ENCODE measurements at regions of chr22 and their contacts with region 1.

Region 1: GRCh38 chr22:30386960-30387827 is at the start of gene RNF215:
- DNase-seq: peak; percentile 87 to 88 (median 88)
- ATAC-seq: peak; percentile 84 to 94 (median 89)
- H3K4me3 ChIP-seq: peak within 1 kb of the TSS; percentile 56 to 68 (median 57)
- H3K27ac ChIP-seq: peak within 1 kb of the TSS in 1 of 3 donors; percentile 40
- H3K4me1 ChIP-seq: peaks cover 0 to 13% (median 6%) of the 10 kb centered on the region in 4 donors
- H3K27me3 ChIP-seq: no peaks in the 10 kb centered on the region
- CTCF ChIP-seq: peak; percentile 92 to 98 (median 93)
- POLR2A ChIP-seq: no peak
- total RNA-seq, gene RNF215: 6.2 to 10.0 (median 7.4) TPM

Region 2: GRCh38 chr22:29394931-29395581 is 992.1 kb before region 1 on chr22:
- intact Hi-C with region 1: loop called in 1 of 2 experiments (anchors 5 kb)
- DNase-seq: peak; percentile 59 to 72 (median 64)
- ATAC-seq: peak; percentile 92 to 95 (median 94)
- H3K4me3 ChIP-seq: no peak overlapping the region
- H3K27ac ChIP-seq: no peak overlapping the region
- H3K4me1 ChIP-seq: no peaks in the 10 kb centered on the region
- H3K27me3 ChIP-seq: no peaks in the 10 kb centered on the region
- CTCF ChIP-seq: peak; percentile 78 to 83 (median 80)
- POLR2A ChIP-seq: no peak

Region 3: GRCh38 chr22:30104501-30105156 is 282.6 kb before region 1 on chr22:
- intact Hi-C with region 1: loop called in 1 of 2 experiments (anchors 10 kb)
- DNase-seq: no peak
- ATAC-seq: no peak
- H3K4me3 ChIP-seq: no peak overlapping the region
- H3K27ac ChIP-seq: no peak overlapping the region
- H3K4me1 ChIP-seq: no peaks in the 10 kb centered on the region
- H3K27me3 ChIP-seq: no peaks in the 10 kb centered on the region
- CTCF ChIP-seq: no peak
- POLR2A ChIP-seq: no peak

Region 4: DNA sequence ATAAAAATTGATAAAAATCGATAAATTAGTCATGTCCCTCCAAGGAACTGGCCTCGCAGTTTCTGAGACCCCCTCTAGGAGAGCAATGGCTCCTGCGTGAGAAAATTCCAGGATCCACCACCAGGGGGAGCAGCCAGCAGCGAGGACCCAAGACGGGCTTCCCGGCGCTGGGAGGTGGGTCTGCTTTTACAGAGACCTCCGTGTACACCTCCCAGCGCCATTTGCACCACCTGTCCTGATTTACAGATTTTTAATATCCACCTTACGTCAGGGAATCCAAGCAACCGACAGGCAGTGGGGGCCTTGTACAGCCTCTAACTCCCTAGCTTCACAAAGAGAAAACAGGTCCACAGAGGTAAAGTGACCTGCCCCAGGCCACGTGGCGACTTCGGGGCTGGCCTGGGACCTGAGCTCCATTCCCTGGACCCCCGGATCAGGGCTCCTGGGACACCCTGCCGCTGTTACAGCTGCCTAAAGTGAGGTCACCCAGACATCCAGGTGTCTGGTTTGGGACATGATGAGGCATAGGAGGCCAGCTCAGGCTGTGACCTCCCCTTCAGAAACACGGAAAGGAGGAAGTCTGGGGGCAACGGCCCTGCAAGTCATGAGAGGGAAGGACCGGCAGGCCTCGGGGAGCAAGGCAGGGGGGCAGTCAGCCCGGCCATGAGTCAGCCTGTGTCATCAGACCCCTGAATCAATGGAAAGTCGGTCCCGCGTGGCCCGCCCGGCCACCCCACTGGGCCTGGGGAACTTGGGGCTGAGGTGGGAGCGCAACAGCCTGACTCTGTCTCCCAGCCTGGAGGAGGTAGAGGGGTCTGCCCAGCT is 124.1 kb before region 1 on chr22:
- intact Hi-C with region 1: loop called (anchors 5 to 10 kb)
- DNase-seq: peak; percentile 71 to 78 (median 78)
- ATAC-seq: peak; percentile 47 to 71 (median 52)
- H3K4me3 ChIP-seq: peak overlapping the region in 2 of 3 donors; percentile 20 to 24
- H3K27ac ChIP-seq: no peak overlapping the region
- H3K4me1 ChIP-seq: no peaks in the 10 kb centered on the region
- H3K27me3 ChIP-seq: no peaks in the 10 kb centered on the region
- CTCF ChIP-seq: peak; percentile 93 to 99 (median 97)
- POLR2A ChIP-seq: no peak

Region 5: DNA sequence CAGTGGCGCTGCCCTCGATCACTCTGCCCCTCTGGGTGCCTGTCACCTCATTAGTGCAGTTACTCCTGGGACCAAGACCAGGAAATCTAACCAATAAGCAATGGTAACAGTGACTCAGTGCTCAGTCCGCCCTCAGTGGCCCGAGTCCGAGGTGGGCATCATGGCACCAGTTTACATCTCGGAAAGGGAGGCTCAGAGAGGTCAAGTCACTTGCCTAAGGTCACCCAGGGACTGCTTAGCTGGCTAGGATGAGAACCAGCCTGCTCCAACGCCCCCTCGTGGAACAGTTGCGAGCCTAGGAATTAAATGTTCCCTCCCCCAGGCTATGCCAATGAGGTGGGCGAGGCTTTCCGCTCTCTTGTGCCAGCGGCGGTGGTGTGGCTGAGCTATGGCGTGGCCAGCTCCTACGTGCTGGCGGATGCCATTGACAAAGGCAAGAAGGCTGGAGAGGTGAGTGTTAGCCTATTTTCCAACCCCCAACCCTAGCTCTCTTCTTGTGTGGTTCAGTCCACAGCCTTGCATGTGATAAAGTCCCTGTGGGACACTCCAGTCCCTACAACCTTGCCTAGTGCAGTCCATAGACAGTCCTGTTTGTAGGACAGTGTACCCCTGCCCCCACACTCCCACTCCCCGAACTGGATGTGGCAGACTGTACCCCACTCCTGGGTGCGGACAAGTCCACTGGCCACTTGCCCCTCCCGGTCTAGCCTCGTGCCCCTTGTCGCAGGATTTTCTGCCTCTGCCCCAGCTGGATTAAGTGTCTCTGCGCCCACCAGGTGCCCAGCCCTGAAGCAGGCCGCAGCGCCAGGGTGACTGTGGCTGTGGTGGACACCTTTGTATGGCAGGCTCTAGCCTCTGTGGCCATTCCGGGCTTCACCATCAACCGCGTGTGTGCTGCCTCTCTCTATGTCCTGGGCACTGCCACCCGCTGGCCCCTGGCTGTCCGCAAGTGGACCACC is 39.5 kb after region 1 on chr22:
- intact Hi-C with region 1: loop called in 1 of 2 experiments (anchors 2 kb)
- DNase-seq: peak; percentile 87 to 89 (median 88)
- ATAC-seq: peak; percentile 15 to 39 (median 32)
- H3K4me3 ChIP-seq: peak overlapping the region; percentile 51 to 64 (median 59)
- H3K27ac ChIP-seq: peak overlapping the region; percentile 90 to 98 (median 95)
- H3K4me1 ChIP-seq: peaks cover 0 to 40% (median 8%) of the 10 kb centered on the region in 4 donors
- H3K27me3 ChIP-seq: no peaks in the 10 kb centered on the region
- CTCF ChIP-seq: peak; percentile 71 to 79 (median 71)
- POLR2A ChIP-seq: no peak

Region 6: GRCh38 chr22:30474683-30475424 is 87.7 kb after region 1 on chr22:
- intact Hi-C with region 1: loop called in 1 of 2 experiments (anchors 10 kb)
- DNase-seq: peak in 1 of 3 donors; percentile 4
- ATAC-seq: no peak
- H3K4me3 ChIP-seq: no peak overlapping the region
- H3K27ac ChIP-seq: no peak overlapping the region
- H3K4me1 ChIP-seq: peaks cover 0 to 14% (median 6%) of the 10 kb centered on the region in 4 donors
- H3K27me3 ChIP-seq: no peaks in the 10 kb centered on the region
- CTCF ChIP-seq: no peak
- POLR2A ChIP-seq: no peak